ENCODE measurements at regions of chr2 and their contacts with region 1.

Region 1: GRCh38 chr2:9951272-9951972 is at the start of gene GRHL1:
- DNase-seq: peak; percentile 90 to 95
- ATAC-seq: peak; percentile 97 to 99 (median 98)
- H3K4me3 ChIP-seq: peak within 1 kb of the TSS; percentile 40 to 91 (median 75)
- H3K27ac ChIP-seq: peak within 1 kb of the TSS in 8 of 10 donors; percentile 43 to 73 (median 58)
- H3K4me1 ChIP-seq: peaks cover 0 to 12% (median 7%) of the 10 kb centered on the region in 9 donors
- H3K27me3 ChIP-seq: peaks cover 0 to 51% (median under 1%) of the 10 kb centered on the region in 7 donors
- CTCF ChIP-seq: peak in 1 of 9 donors; percentile 20
- total RNA-seq, gene GRHL1: 0.57 to 3.0 (median 1.2) TPM

Region 2: GRCh38 chr2:9813312-9814133 is 137.9 kb before region 1 on chr2:
- intact Hi-C with region 1: loop called in 1 of 10 experiments (anchors 10 kb)
- DNase-seq: peak; percentile 61 to 76
- ATAC-seq: peak; percentile 79 to 92 (median 86)
- H3K4me3 ChIP-seq: peak overlapping the region in 5 of 10 donors; percentile 3 to 29 (median 25)
- H3K27ac ChIP-seq: no peak overlapping the region
- H3K4me1 ChIP-seq: peaks cover 0 to 16% (median 13%) of the 10 kb centered on the region in 9 donors
- H3K27me3 ChIP-seq: peaks cover 0 to 3% (median 0%) of the 10 kb centered on the region in 7 donors
- CTCF ChIP-seq: peak; percentile 80 to 97 (median 94)

Region 3: DNA sequence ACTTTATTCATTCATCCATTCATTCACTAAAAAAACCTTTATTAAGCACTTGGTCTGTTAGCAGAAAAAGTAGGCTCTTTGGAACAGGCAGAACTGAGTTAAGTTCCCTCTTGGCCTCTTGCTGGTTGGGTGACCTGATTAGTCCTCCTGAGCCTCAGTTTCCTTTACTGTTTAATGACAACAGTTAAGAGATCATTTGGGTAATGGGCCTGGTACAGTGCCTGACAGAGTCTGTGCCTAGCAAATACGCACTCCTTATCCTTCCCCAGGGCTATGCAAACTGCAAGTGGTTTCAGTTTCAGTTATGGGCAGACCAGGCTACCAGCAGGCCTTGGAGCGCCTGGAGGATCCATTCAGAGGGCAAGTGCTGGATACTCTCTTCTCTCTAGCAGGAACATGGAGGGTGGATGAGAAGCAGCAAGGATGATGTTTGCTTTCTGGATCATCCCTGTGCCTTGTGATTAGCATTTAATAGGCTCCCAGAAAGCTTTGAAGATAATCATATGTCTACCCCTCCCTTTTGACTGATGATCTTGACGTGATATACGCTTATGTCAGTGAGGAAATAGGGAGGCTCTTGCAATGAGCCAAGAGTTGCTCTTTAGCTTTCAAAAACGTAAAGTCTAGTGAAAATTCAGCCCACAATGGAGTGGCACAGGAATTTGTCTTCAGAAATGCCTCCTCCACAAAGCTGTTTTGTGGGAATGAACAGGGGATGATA is 120.6 kb before region 1 on chr2:
- intact Hi-C with region 1: loop called in 1 of 10 experiments (anchors 10 kb)
- DNase-seq: no peak
- ATAC-seq: no peak
- H3K4me3 ChIP-seq: no peak overlapping the region
- H3K27ac ChIP-seq: no peak overlapping the region
- H3K4me1 ChIP-seq: no peaks in the 10 kb centered on the region
- H3K27me3 ChIP-seq: peaks cover 0 to 22% (median 0%) of the 10 kb centered on the region in 7 donors
- CTCF ChIP-seq: no peak

Region 4: GRCh38 chr2:9843229-9844035 is 108.0 kb before region 1 on chr2 and contains the start of gene TAF1B:
- intact Hi-C with region 1: loop called in 4 of 10 experiments (anchors 1 to 10 kb)
- DNase-seq: peak; percentile 84 to 88
- ATAC-seq: peak; percentile 94 to 98 (median 96)
- H3K4me3 ChIP-seq: peak within 1 kb of the TSS; percentile 30 to 89 (median 68)
- H3K27ac ChIP-seq: peak within 1 kb of the TSS in 9 of 10 donors; percentile 62 to 94 (median 85)
- H3K4me1 ChIP-seq: peaks cover 0 to 30% (median 15%) of the 10 kb centered on the region in 9 donors
- H3K27me3 ChIP-seq: no peaks in the 10 kb centered on the region
- CTCF ChIP-seq: peak in 7 of 9 donors; percentile 11 to 76 (median 51)
- total RNA-seq, gene TAF1B: 2.4 to 7.9 (median 4.9) TPM

Region 5: DNA sequence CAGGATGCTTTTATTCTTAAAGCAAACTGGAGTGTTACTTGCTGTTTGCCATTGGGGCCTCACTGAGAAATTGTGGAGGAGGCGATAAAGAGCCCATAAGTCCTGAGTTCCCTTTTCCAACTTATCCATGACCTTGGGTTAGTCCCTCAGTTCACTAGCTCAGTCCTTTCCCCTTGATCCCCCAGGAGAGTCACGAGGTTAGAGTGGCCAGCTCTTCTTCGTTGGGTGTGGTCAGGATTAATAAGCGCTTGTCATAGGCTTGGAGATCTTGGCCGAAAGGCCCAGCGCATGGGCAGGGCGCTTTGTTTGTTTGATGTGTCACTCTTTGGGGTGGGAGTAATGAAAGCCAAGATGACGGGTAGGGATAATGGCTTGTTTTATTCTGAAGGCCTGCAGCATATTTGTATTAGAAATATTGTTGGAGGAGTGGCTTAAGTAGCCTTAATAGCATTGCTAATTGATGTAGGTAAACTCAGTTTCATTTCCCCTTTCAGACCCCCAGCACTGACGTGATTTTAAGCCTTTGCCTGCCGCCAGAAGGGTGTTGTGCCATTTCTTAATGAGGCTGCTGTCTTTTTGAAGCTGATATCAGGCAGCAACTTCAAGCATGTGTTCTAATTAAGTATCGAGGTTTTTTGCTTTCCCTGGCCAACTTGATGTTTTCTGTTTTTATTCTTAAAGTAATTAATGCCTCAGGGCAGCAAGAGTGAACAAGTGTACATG is 15.8 kb after region 1 on chr2:
- intact Hi-C with region 1: no loop called
- DNase-seq: no peak
- ATAC-seq: no peak
- H3K4me3 ChIP-seq: no peak overlapping the region
- H3K27ac ChIP-seq: no peak overlapping the region
- H3K4me1 ChIP-seq: peaks cover 0 to 11% (median 0%) of the 10 kb centered on the region in 9 donors
- H3K27me3 ChIP-seq: no peaks in the 10 kb centered on the region
- CTCF ChIP-seq: no peak

Region 6: DNA sequence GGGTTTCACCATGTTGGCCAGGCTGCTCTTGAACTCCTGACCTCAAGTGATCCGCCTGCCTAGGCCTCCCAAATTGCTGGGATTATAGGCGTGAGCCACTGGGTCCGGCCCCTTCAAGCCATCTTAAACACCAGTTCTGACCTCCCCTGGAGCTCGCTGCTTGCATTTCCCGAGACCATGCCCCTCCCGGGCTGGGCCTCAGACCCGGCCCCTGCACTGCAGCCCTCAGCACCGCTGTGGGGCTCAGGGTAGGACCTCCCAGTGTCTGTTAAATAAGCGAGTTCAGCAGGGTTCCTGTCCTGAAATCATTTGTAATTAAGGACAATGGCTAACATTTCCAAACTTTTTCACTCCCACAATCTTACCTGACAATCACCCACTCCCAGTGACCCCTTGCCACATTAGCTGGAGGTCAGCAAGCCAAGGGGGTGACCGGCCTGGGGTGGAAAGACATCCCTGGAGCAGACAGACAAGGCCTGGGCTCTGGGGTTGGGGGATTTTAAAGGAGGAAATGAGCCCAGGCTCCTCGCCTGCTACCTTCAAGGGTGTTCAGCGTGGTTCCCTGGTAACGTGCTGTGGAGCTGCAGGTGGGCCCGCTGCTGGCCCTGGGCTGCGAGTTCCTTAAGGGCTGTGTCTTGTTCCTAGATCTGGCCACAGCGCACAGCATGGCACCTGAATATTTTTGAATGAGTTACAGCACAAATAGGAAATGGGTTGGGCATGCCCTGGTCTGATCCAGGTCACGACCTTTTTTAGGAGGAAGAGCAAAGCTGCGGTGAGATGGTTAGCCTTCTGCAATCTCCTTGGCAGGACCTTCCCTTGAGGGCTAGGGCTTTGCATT is 113.7 kb after region 1 on chr2:
- intact Hi-C with region 1: no loop called
- DNase-seq: no peak
- ATAC-seq: no peak
- H3K4me3 ChIP-seq: no peak overlapping the region
- H3K27ac ChIP-seq: no peak overlapping the region
- H3K4me1 ChIP-seq: peaks cover 0 to 16% (median 3%) of the 10 kb centered on the region in 9 donors
- H3K27me3 ChIP-seq: no peaks in the 10 kb centered on the region
- CTCF ChIP-seq: no peak